ENCODE measurements at regions of chr18 and their contacts with region 1.

Region 1: GRCh38 chr18:54149078-54149697 is 75.3 kb downstream of the MBD2 start:
- DNase-seq: no peak
- H3K4me3 Mint-ChIP-seq: peak overlapping the region; percentile 43
- H3K27ac Mint-ChIP-seq: peak overlapping the region; percentile 94
- H3K4me1 Mint-ChIP-seq: peaks cover 48% of the 10 kb centered on the region
- H3K27me3 Mint-ChIP-seq: no peaks in the 10 kb centered on the region

Region 2: GRCh38 chr18:54163453-54163852 is 14.3 kb after region 1 on chr18:
- intact Hi-C with region 1: loop called (anchors 1 kb)
- DNase-seq: no peak
- H3K4me3 Mint-ChIP-seq: no peak overlapping the region
- H3K27ac Mint-ChIP-seq: peak overlapping the region; percentile 79
- H3K4me1 Mint-ChIP-seq: peaks cover 25% of the 10 kb centered on the region
- H3K27me3 Mint-ChIP-seq: no peaks in the 10 kb centered on the region

Region 3: GRCh38 chr18:54181856-54182602 is 32.8 kb after region 1 on chr18:
- intact Hi-C with region 1: loop called (anchors 1 kb)
- DNase-seq: no peak
- H3K4me3 Mint-ChIP-seq: no peak overlapping the region
- H3K27ac Mint-ChIP-seq: no peak overlapping the region
- H3K4me1 Mint-ChIP-seq: peaks cover 11% of the 10 kb centered on the region
- H3K27me3 Mint-ChIP-seq: no peaks in the 10 kb centered on the region

Region 4: DNA sequence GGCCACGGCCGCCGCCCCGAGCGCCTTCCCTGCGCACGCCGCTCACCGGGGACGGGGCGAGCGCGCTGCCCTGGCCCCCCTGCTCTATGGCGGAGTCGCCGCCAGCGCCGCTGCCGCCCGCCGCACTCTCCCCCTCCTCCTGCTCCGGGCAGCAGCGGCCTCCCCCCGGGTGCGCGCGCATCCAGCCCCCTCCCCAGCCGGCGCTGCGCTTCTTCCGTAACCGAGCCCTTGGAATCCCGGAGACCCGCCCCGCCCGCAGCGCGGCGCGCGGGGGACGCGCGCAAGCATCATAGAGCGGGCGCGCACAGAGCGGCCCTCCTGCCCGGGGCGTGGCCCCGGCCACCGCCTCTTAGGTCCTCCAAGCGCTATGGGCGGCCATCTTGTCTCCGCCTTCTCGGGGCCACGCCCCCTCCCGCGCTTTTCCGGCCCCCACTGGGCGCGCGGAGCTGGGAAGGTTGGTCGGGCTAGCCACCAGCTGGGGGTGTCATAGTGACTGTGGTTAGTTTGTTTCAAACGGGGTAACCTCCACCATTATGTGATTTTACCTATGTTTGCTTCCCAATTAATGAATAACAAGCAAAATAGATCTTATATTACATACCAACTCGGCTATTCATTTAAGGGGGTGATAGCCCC is 75.3 kb after region 1 on chr18 and contains the start of gene MBD2:
- intact Hi-C with region 1: loop called (anchors 1 kb)
- DNase-seq: peak; percentile 91
- H3K4me3 Mint-ChIP-seq: peak within 1 kb of the TSS; percentile 98
- H3K27ac Mint-ChIP-seq: peak within 1 kb of the TSS; percentile 95
- H3K4me1 Mint-ChIP-seq: peaks cover 44% of the 10 kb centered on the region
- H3K27me3 Mint-ChIP-seq: no peaks in the 10 kb centered on the region
- total RNA-seq, gene MBD2: 165 and 196 TPM in 2 replicates

Region 5: GRCh38 chr18:54712306-54712705 is 563.1 kb after region 1 on chr18:
- intact Hi-C with region 1: loop called (anchors 2 kb)
- DNase-seq: no peak
- H3K4me3 Mint-ChIP-seq: no peak overlapping the region
- H3K27ac Mint-ChIP-seq: no peak overlapping the region
- H3K4me1 Mint-ChIP-seq: peaks cover 48% of the 10 kb centered on the region
- H3K27me3 Mint-ChIP-seq: peaks cover 43% of the 10 kb centered on the region

Measured in activated T-helper 2 cell treated with anti-CD3 and anti-CD28 coated beads, Interferon-gamma antibody, Interleukin-2, Interleukin-4, amounts not matched to agents 10 μg/mL and 5 μg/mL and 100 μg/mL, durations not matched to agents 14 hours and 24 hours and 36 hours (primary cell).